GM10248 (cell line): ENCODE measurements at regions of chr2 and their contacts with region 1.

Region 1: DNA sequence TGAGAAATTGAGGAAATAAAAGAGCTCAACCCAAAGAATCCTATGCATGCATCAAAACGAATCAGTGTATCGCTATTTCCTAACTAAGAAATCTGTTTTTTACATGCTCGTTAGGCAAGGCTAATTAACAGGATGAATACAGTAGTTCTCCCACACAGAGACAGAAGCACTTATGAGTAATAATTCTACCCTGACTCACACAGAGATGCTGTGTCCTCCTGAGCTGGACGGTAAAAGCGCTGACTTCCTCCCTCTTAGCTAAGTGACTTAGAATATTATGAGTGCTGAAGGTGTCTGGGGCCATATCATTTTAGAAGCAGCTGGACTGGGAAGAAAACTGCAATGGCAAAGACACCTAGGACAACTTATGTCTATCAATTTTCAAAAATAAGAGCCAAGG is 18.5 kb downstream of the PLEKHM3 start:
- DNase-seq: no peak
- CTCF ChIP-seq: no peak

Region 2: GRCh38 chr2:208025037-208025813 is 18.4 kb after region 1 on chr2 and contains the start of gene PLEKHM3:
- CTCF ChIA-PET with region 1: interaction called, 10 read pairs
- POLR2A ChIA-PET with region 1: no interaction called
- DNase-seq: peak; percentile 83
- CTCF ChIP-seq: no peak